SK-N-SH (cell line): ENCODE measurements at regions of chr2 and their contacts with region 1.

Region 1: GRCh38 chr2:209423562-209424198 is at the start of gene MAP2:
- DNase-seq: peak; percentile 96
- H3K4me3 ChIP-seq: peak within 1 kb of the TSS; percentile 93 to 94
- H3K27ac ChIP-seq: peak within 1 kb of the TSS; percentile 24 to 53; a peak in 2 of 4 replicates
- H3K4me1 ChIP-seq: peaks cover 0 to 4% of the 10 kb centered on the region in 2 experiments; a peak in 3 of 4 replicates
- H3K27me3 ChIP-seq: no peaks in the 10 kb centered on the region
- CTCF ChIP-seq: peak; percentile 66
- EP300 ChIP-seq: no peak; a peak in 1 of 4 replicates
- RAD21 ChIP-seq: peak; percentile 63
- polyA plus RNA-seq, gene MAP2: 7.8 and 11.1 TPM in 2 replicates

Region 2: DNA sequence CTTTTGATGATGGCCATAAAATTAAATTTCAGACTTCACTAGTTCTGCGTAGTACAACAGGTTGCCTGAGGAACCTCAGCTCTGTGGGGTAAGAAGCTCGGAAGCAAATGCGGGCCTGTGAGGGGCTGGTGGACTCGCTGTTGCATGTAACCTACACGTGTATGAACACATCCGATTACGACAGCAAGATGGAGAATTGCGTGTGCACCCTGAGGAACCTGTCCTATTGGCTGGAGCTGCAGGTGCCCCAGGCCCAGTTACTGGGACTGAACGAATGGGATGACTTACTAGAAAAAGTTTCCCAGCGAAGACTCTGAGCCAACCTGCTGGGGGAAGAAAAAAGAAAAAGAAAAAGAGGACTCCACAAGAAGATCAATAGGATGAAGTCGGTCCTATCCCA is 244.0 kb before region 1 on chr2:
- CTCF ChIA-PET with region 1: no interaction called
- POLR2A ChIA-PET with region 1: no interaction called
- DNase-seq: no peak
- H3K4me3 ChIP-seq: no peak overlapping the region
- H3K27ac ChIP-seq: no peak overlapping the region
- H3K4me1 ChIP-seq: no peaks in the 10 kb centered on the region
- H3K27me3 ChIP-seq: no peaks in the 10 kb centered on the region
- CTCF ChIP-seq: no peak
- EP300 ChIP-seq: no peak
- RAD21 ChIP-seq: no peak

Region 3: GRCh38 chr2:209368900-209369299 is 54.8 kb before region 1 on chr2:
- CTCF ChIA-PET with region 1: interaction called, 10 read pairs
- POLR2A ChIA-PET with region 1: no interaction called
- DNase-seq: no peak
- H3K4me3 ChIP-seq: peak overlapping the region in 1 of 2 experiments; percentile 16; a peak in 2 of 4 replicates
- H3K27ac ChIP-seq: peak overlapping the region; percentile 68 to 89; a peak in 3 of 4 replicates
- H3K4me1 ChIP-seq: peaks cover 2 to 17% of the 10 kb centered on the region in 2 experiments; a peak in 3 of 4 replicates
- H3K27me3 ChIP-seq: no peaks in the 10 kb centered on the region
- CTCF ChIP-seq: no peak
- EP300 ChIP-seq: peak in 1 of 2 experiments; percentile 98; a peak in 2 of 4 replicates
- RAD21 ChIP-seq: no peak

Region 4: DNA sequence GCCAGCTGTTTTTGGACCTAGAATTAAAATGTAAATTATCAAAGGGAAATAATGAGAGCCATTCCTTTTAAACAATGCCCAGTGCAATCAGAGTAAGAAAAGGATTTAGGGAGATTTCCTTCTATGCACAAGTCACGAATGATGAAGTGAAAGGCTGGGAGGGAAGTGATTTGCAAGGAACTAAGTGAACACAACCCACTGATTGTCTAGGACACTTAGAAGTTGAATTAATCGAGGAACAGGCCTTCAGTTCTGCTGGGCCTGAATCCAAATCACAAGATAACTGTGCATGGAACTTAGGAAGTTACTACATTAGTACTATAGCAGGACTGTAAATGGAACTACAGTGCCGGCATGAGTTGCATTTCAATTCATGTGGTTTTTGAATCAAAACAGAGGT is 17.9 kb after region 1 on chr2:
- CTCF ChIA-PET with region 1: interaction called, 19 read pairs
- POLR2A ChIA-PET with region 1: no interaction called
- DNase-seq: no peak
- H3K4me3 ChIP-seq: no peak overlapping the region
- H3K27ac ChIP-seq: no peak overlapping the region; a peak in 1 of 4 replicates
- H3K4me1 ChIP-seq: peaks cover 0 to 14% of the 10 kb centered on the region in 2 experiments; a peak in 2 of 4 replicates
- H3K27me3 ChIP-seq: no peaks in the 10 kb centered on the region
- CTCF ChIP-seq: no peak
- EP300 ChIP-seq: no peak
- RAD21 ChIP-seq: no peak

Region 5: GRCh38 chr2:209549589-209549988 is 125.9 kb after region 1 on chr2:
- CTCF ChIA-PET with region 1: interaction called, 17 read pairs
- POLR2A ChIA-PET with region 1: interaction called, 3 read pairs
- DNase-seq: no peak
- H3K4me3 ChIP-seq: no peak overlapping the region
- H3K27ac ChIP-seq: no peak overlapping the region
- H3K4me1 ChIP-seq: no peaks in the 10 kb centered on the region
- H3K27me3 ChIP-seq: no peaks in the 10 kb centered on the region
- CTCF ChIP-seq: no peak
- EP300 ChIP-seq: no peak
- RAD21 ChIP-seq: no peak

Region 6: GRCh38 chr2:209565896-209566582 is 142.4 kb after region 1 on chr2:
- CTCF ChIA-PET with region 1: interaction called, 13 read pairs
- POLR2A ChIA-PET with region 1: no interaction called
- DNase-seq: no peak
- H3K4me3 ChIP-seq: no peak overlapping the region
- H3K27ac ChIP-seq: no peak overlapping the region
- H3K4me1 ChIP-seq: no peaks in the 10 kb centered on the region; a peak in 1 of 4 replicates
- H3K27me3 ChIP-seq: no peaks in the 10 kb centered on the region
- CTCF ChIP-seq: no peak
- EP300 ChIP-seq: no peak
- RAD21 ChIP-seq: no peak

Region 7: DNA sequence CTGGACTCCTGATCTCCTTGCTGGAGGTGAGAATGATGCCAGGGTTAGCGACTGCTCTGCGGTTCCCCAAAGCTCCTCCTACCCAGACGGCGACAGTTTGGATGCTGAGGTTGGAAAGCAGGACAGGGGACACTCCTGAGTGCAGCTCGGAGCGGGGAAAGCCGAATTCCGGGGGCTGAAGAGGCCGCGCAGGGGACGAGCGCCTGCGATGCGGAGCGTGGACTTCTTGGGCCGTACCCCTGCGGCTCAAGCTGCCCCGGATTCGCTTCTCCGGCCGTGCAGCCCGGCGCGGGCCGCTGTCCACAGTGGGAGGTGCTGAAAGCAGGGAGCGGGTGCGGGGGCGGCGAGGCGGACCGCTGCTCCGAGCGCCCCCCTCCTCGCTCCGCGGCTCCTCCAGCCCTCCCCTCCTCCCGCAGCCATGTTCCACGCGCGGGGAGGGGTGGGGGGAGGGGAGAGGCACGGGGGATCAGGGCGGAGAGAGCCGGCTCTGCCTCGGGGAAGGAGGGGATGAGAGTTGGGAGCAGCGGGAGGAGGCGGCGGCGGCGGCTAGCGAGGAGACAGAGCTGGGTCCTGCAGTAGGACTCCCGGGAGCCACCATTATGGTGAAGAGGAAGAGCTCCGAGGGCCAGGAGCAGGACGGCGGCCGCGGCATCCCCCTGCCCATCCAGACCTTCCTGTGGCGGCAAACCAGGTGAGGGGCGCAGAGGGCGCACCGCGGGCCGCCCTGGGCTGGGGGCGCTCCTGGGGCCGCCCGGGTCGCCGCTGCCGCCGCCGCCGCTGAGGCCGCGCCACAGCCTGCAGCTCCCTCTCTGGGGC is 348.0 kb after region 1 on chr2 and contains the start of gene UNC80:
- CTCF ChIA-PET with region 1: interaction called, 12 read pairs
- POLR2A ChIA-PET with region 1: interaction called, 6 read pairs
- DNase-seq: peak; percentile 95
- H3K4me3 ChIP-seq: peak within 1 kb of the TSS; percentile 60 to 63
- H3K27ac ChIP-seq: peak within 1 kb of the TSS in 1 of 2 experiments; percentile 85; a peak in 2 of 4 replicates
- H3K4me1 ChIP-seq: peaks cover 0 to 5% of the 10 kb centered on the region in 2 experiments; a peak in 2 of 4 replicates
- H3K27me3 ChIP-seq: no peaks in the 10 kb centered on the region; the same call in 1 of the 2 replicates
- CTCF ChIP-seq: no peak
- EP300 ChIP-seq: no peak
- RAD21 ChIP-seq: peak; percentile 16; the same call in 1 of the 2 replicates
- polyA plus RNA-seq, gene UNC80: 0.59 and 1.3 TPM in 2 replicates